A673 (cell line): ENCODE measurements at regions of chr22 and their contacts with region 1.

Region 1: DNA sequence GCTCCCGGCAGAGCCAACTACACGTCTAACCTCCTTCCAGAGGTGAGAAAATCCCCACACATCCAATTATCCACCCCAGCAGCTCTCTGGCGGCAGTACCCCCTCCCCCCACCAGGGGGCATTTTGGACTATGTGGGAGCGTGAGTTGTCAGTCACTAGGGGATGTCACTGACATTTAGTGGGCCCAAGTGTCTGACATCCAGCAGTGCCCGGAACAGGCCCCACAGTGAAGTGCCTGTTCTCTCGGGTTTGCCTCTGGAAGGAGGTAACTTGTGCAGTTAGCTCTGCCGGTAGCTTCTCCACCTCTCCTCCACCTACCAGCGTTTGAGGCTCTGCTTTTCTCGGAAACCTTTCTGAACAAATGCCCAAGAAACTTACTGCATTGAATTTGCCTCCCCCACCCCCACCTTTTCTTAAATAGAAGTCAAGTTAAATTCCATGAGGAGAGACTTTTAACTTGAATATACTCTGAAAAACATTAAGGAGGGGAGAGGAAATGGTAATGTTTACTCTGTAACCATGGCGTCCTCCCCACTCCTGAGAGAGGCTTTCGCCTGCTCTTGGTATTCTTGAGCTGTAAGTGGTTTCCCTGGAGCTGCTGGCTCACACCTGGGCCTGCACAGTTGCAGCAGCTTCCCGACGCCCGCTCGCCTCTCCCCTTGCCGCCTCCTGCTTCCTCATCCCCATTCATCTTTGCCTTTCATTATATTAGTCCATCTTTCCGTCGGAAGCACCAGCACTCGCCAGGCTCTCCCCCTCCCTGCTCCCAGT is 112.8 kb downstream of the WNT7B start:
- DNase-seq: peak; percentile 82
- H3K4me3 ChIP-seq: no peak overlapping the region
- H3K27ac ChIP-seq: no peak overlapping the region
- H3K4me1 ChIP-seq: no peaks in the 10 kb centered on the region
- H3K27me3 ChIP-seq: peaks cover 33% of the 10 kb centered on the region
- CTCF ChIP-seq: peak; percentile 95

Region 2: GRCh38 chr22:45577746-45578523 is 286.2 kb before region 1 on chr22:
- CTCF ChIA-PET with region 1: no interaction called
- POLR2A ChIA-PET with region 1: no interaction called
- intact Hi-C with region 1: loop called (anchors 10 kb)
- DNase-seq: peak; percentile 85
- H3K4me3 ChIP-seq: no peak overlapping the region
- H3K27ac ChIP-seq: no peak overlapping the region
- H3K4me1 ChIP-seq: no peaks in the 10 kb centered on the region
- H3K27me3 ChIP-seq: no peaks in the 10 kb centered on the region
- CTCF ChIP-seq: peak; percentile 98

Region 3: DNA sequence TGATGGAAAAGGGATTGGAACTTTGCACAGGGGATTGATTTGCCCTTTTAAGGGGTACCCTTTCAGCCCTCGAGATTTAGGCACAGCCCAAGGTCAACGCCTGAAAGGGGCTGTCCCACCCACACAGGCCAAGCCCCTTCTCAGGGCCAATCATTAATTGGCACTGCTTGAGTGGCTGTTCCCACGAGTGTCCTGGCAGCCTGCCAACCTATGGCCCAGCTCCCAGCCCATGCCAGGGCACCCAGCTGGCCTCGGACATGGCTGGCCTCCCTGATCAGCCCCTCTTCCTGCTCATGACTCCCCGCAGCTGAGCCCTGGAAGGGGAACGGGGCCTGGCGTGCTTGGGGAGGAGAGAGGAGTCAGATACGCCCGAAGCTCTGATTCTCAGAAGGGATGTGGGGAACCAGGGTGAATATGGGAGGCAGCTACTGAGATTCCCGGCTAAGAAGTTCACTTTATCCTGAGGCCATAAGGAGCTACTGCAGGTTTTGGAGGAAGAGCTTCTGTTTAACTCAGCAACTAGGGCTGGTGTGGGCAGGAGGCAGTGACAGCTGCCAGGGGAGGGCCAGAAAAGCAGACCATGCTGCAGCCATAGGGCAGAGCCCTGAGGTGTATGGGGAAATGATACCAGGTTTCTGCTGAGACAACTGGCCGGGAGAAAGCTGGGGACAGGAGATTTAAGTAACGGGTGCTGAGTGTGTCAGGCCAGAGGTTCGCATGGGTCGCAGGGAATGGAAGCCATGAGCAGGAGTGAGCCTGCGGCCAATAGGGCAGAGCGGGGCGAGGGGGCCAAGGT is 82.8 kb after region 1 on chr22:
- CTCF ChIA-PET with region 1: no interaction called
- POLR2A ChIA-PET with region 1: no interaction called
- intact Hi-C with region 1: no loop called
- DNase-seq: no peak
- H3K4me3 ChIP-seq: no peak overlapping the region
- H3K27ac ChIP-seq: no peak overlapping the region
- H3K4me1 ChIP-seq: no peaks in the 10 kb centered on the region
- H3K27me3 ChIP-seq: no peaks in the 10 kb centered on the region
- CTCF ChIP-seq: no peak